A549 (cell line): ENCODE measurements at regions of chr14 and their contacts with region 1.

Region 1: GRCh38 chr14:34300882-34301734 is 160.9 kb downstream of the SPTSSA start:
- DNase-seq: peak; percentile 41 to 59
- ATAC-seq: peak; percentile 71 to 78; a peak in 5 of 6 replicates
- H3K4me3 ChIP-seq: no peak overlapping the region
- H3K27ac ChIP-seq: no peak overlapping the region
- H3K4me1 ChIP-seq: peaks cover 8% of the 10 kb centered on the region
- CTCF ChIP-seq: peak; percentile 73
- EP300 ChIP-seq: no peak
- POLR2A ChIP-seq: no peak
- RAD21 ChIP-seq: peak; percentile 77 to 79

Region 2: DNA sequence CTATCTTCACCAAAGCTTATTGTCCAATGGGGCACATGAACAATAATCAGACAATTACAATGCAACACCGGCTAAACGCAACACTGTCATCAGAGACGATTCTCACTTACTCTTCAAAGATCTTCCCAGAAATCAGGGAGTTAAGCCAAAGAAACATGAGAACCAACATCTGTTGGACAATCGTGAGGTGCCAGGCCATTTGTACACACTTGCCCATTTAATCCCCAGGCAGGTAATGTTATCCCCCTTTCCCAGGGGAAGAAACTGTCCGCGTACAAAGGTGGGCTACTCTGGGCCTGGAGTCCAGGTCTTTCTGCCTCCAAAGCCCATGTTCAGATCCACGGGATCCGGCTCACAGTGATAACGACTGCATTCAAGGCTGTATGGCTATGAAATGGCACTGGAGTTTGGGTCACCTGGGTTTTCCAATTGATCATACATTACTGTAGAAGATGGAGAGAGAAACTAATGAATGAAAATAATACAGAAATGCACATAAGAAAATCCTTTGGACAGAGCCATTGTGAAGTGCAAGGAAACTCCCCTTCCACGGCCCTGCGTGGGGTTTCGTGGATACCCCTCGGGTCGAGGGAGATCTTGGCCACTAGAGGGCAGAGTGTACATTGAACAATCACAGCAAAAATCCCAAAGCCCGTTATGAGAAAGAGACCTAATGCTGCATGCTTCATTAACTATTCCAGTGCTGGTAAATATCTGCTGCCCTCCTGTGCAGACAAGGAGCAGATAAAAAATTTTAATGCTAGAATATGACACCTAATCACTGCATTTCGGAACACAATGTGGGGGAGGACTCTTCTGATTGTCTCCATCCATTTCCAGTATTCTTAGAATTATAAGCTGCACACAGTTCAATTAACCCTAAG is 461.7 kb before region 1 on chr14:
- CTCF ChIA-PET with region 1: interaction called, 15 read pairs
- POLR2A ChIA-PET with region 1: no interaction called
- DNase-seq: peak; percentile 40 to 42
- ATAC-seq: peak; percentile 87
- H3K4me3 ChIP-seq: no peak overlapping the region
- H3K27ac ChIP-seq: no peak overlapping the region
- H3K4me1 ChIP-seq: 0 out of 3 replicates have a peak, but pooled peaks cover 5% of the 10 kb centered on the region
- CTCF ChIP-seq: peak; percentile 81
- EP300 ChIP-seq: no peak
- POLR2A ChIP-seq: no peak
- RAD21 ChIP-seq: peak; percentile 77 to 87

Region 3: DNA sequence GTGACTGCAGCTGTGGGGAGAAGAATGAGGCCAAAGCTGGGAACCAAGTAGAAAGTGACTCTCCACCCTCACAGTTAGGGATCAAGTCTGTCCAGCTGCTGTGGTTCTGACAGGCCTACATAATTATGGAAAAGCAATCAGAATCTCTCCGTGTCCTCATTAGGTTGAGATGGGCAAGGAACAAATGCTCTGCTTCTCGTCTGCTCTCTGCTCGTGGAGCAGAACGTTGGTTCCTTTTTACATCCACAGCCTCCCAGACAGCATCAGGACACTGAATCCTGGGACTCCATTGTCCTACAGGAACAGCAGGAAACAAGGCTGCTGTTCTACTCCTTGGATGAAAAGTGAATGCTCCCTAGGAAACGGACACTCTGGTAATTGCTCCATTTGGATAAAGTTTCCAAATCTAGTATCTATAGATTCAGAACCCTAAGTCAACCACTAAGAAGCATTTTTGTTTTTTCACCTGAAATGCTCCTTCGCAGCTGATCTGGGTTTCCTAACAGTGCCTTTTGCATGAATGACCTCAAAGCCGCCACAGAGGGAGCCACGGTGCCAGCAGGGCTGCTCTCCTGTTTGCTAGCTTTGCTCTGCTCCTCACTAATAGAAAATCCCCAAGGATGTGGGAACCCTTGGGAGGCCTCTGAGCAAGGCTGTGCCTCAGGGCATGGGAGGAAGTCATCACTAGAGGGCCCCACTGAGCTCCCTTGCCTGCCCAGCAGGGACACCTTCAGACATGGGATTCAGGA is 452.2 kb before region 1 on chr14:
- CTCF ChIA-PET with region 1: interaction called, 15 read pairs
- POLR2A ChIA-PET with region 1: no interaction called
- DNase-seq: peak; percentile 51 to 73
- ATAC-seq: peak; percentile 92 to 98
- H3K4me3 ChIP-seq: no peak overlapping the region
- H3K27ac ChIP-seq: no peak overlapping the region
- H3K4me1 ChIP-seq: no peaks in the 10 kb centered on the region
- CTCF ChIP-seq: peak; percentile 56
- EP300 ChIP-seq: no peak
- POLR2A ChIP-seq: no peak
- RAD21 ChIP-seq: peak; percentile 63 to 69

Region 4: DNA sequence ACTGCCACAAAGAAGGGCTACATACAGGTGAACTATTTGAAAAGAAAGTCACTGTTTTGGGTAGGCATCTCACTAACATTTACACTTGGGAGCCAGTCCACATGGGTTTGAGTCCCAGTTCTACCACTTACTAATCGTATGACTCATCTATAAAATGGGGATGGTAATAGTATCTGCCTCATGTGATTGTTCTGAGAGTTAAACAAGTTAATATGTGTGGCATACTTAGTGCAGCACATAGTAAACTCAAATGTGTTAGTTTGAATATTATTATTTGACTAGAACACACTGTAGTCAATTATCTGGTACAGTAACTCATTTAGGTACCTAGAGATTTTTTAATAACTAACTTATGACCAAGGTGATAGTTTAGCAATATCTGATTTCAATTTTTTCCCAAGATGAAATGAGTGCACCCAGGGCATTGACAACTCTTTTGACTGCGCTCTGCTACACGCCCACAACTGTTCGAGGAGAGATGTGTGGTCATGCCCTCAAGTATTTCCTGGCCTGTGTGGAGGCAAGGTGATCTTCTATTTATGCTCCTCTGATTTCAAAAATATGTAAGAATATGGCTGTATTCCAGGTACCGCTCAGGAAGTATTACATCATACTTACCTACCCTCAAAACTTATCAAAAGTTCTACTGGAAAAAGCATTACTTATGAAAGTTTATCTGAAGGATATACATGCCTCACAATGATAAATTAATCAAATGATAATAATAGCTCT is 139.6 kb before region 1 on chr14:
- CTCF ChIA-PET with region 1: no interaction called
- POLR2A ChIA-PET with region 1: no interaction called
- DNase-seq: no peak
- ATAC-seq: no peak
- H3K4me3 ChIP-seq: no peak overlapping the region
- H3K27ac ChIP-seq: no peak overlapping the region
- H3K4me1 ChIP-seq: no peaks in the 10 kb centered on the region
- CTCF ChIP-seq: no peak
- EP300 ChIP-seq: no peak
- POLR2A ChIP-seq: no peak
- RAD21 ChIP-seq: no peak